Transverse colon (tissue), 4 donors: ENCODE measurements at regions of chr1 and their contacts with region 1.

Region 1: GRCh38 chr1:64864018-64864940 is 102.1 kb downstream of the JAK1 start:
- DNase-seq: peak; percentile 78
- H3K4me3 ChIP-seq: no peak overlapping the region
- H3K27ac ChIP-seq: peak overlapping the region; percentile 19 to 67 (median 59)
- H3K4me1 ChIP-seq: peaks cover 0 to 10% (median 0%) of the 10 kb centered on the region in 4 donors
- H3K27me3 ChIP-seq: no peaks in the 10 kb centered on the region
- CTCF ChIP-seq: no peak
- EP300 ChIP-seq: no peak
- POLR2A ChIP-seq: no peak

Region 2: DNA sequence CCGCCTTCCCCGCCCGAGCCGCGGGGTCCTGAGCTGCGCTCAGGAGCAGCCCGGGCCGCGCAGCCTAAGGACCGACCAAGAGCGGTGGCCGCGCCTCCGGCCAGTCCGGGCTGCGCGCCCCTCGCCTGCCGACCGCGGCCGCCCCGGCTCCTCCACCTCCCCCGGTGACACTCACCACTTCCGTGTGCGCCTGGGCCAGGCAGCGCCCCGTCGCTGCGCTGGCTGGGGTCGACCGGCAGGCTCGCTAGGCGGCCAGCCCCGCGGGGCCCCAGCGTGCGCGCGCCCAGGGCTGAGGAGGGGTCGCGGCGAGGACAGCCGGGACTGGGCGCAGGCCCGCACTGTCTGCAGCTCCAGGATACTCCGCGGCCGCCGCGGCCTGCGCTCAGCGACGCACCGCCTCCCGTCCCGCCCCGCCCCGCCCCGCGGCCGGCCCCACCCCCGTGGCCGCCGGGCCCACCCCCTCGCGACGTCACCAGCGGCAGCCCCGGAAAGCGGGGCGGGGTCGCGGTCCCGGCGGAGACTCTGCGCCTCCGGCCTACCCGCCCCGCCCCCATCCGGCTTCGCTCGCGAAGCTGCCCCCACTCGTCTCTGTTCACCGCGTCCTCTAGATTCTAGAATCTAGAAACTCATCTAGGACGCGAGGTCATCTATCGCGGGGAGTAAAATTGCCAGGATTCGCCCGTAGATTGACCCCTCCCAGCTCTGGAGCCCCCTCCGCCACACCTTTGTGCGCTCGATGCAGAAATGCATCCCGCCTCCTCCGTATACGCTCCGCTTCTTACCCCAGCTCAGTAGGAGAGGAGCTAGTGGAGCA is 102.1 kb after region 1 on chr1 and contains the start of gene JAK1:
- in situ Hi-C with region 1: loop called in 1 of 4 experiments (anchors 25 kb)
- intact Hi-C with region 1: no loop called
- DNase-seq: peak; percentile 91
- H3K4me3 ChIP-seq: peak within 1 kb of the TSS; percentile 92 to 97 (median 95)
- H3K27ac ChIP-seq: peak within 1 kb of the TSS; percentile 97 to 98 (median 98)
- H3K4me1 ChIP-seq: peaks cover 15 to 46% (median 28%) of the 10 kb centered on the region in 4 donors
- H3K27me3 ChIP-seq: no peaks in the 10 kb centered on the region
- CTCF ChIP-seq: no peak
- EP300 ChIP-seq: no peak
- POLR2A ChIP-seq: peak; percentile 5
- total RNA-seq, gene JAK1: 52.9 to 169 (median 126) TPM

Region 3: GRCh38 chr1:65075123-65075976 is 211.1 kb after region 1 on chr1:
- in situ Hi-C with region 1: loop called in 2 of 4 experiments (anchors 10 kb)
- intact Hi-C with region 1: no loop called
- DNase-seq: peak; percentile 63
- H3K4me3 ChIP-seq: no peak overlapping the region
- H3K27ac ChIP-seq: no peak overlapping the region
- H3K4me1 ChIP-seq: no peaks in the 10 kb centered on the region
- H3K27me3 ChIP-seq: no peaks in the 10 kb centered on the region
- CTCF ChIP-seq: peak; percentile 67 to 76 (median 72)
- EP300 ChIP-seq: no peak
- POLR2A ChIP-seq: no peak

Region 4: GRCh38 chr1:65209005-65209885 is 345.0 kb after region 1 on chr1:
- in situ Hi-C with region 1: loop called in 1 of 4 experiments (anchors 25 kb)
- intact Hi-C with region 1: no loop called
- DNase-seq: peak; percentile 16
- H3K4me3 ChIP-seq: no peak overlapping the region
- H3K27ac ChIP-seq: no peak overlapping the region
- H3K4me1 ChIP-seq: no peaks in the 10 kb centered on the region
- H3K27me3 ChIP-seq: no peaks in the 10 kb centered on the region
- CTCF ChIP-seq: peak; percentile 57 to 75 (median 62)
- EP300 ChIP-seq: no peak
- POLR2A ChIP-seq: no peak

Region 5: DNA sequence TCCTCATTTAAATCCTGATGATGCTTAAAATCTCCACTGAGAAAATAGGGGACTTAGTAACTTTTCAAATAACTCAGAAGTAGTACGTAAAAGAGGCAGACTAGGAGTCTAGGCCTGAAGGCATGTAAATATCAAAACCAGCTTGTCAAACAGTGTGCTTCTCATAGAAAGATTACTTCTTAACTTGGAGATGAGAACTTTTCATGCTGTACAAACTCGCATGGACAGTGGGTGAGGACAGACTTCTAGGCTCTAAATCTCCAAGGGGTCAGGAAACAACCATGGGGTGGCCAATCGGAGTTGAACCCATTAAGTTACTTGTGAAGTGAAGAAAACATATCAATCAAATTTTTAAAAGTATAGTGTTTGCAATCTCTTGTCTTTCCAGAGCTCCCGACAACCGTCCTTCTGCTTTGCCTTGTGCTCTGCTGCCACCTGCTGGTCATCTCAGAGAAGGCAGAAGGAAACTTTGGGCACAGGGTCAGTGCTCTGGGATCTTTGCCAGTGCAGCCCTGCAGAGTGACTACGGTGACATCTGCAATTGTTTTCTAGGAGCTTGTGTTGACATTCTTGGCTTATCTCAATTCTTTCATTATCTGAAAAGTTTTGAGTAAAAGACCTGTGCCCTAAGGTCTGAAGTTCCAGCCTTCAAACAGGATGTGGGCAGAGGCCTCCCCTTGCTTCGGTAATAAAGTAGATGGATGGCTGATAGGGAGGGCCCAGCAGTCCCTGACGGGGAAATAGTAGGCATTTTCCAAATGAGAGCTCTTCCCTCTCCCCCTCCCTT is 823.3 kb after region 1 on chr1:
- in situ Hi-C with region 1: loop called in 1 of 4 experiments (anchors 25 kb)
- intact Hi-C with region 1: no loop called
- DNase-seq: peak; percentile 90
- H3K4me3 ChIP-seq: no peak overlapping the region
- H3K27ac ChIP-seq: no peak overlapping the region
- H3K4me1 ChIP-seq: peaks cover 0 to 19% (median 10%) of the 10 kb centered on the region in 4 donors
- H3K27me3 ChIP-seq: no peaks in the 10 kb centered on the region
- CTCF ChIP-seq: peak; percentile 94 to 96 (median 95)
- EP300 ChIP-seq: no peak
- POLR2A ChIP-seq: no peak

Region 6: DNA sequence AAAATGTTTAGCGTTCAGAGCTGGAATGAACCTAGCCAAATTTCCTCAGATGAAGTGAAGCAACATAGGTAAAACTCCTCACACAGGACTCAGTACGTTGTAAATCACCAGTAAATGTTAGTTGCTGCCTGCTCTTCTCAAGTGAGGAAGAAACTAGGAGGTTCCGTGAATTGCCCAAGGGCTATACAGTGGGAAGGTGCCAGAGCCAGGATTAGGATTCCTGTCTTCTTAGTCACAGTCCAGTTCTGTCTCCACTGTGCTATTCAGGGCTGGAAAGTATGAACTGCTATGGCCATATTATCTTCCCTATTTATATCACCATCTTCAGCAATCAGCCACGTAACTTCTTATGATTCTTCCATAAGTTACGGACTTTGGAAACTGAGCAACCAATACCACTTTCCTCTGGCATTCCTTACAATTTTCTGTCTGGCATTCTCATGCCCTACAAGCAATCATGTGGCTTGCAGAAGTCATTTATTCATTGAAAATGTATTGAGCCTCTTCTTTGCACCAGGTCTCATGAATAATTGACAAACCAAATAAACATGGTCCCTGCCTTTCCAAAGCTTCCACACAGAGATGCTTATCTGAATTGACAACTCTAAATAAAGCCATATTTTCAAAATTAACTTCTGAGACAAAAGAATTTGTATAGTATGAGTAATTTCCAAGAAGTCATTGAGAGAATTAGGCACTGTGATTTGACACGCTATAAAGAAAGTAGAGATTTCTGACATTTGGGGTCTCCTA is 1398.1 kb after region 1 on chr1:
- in situ Hi-C with region 1: no loop called
- intact Hi-C with region 1: loop called (anchors 5 kb)
- DNase-seq: peak; percentile 49
- H3K4me3 ChIP-seq: no peak overlapping the region
- H3K27ac ChIP-seq: peak overlapping the region; percentile 4 to 68 (median 24)
- H3K4me1 ChIP-seq: peaks cover 0 to 25% (median 5%) of the 10 kb centered on the region in 4 donors
- H3K27me3 ChIP-seq: no peaks in the 10 kb centered on the region
- CTCF ChIP-seq: no peak
- EP300 ChIP-seq: no peak
- POLR2A ChIP-seq: no peak